ENCODE measurements at regions of chr19 and their contacts with region 1.

Region 1: DNA sequence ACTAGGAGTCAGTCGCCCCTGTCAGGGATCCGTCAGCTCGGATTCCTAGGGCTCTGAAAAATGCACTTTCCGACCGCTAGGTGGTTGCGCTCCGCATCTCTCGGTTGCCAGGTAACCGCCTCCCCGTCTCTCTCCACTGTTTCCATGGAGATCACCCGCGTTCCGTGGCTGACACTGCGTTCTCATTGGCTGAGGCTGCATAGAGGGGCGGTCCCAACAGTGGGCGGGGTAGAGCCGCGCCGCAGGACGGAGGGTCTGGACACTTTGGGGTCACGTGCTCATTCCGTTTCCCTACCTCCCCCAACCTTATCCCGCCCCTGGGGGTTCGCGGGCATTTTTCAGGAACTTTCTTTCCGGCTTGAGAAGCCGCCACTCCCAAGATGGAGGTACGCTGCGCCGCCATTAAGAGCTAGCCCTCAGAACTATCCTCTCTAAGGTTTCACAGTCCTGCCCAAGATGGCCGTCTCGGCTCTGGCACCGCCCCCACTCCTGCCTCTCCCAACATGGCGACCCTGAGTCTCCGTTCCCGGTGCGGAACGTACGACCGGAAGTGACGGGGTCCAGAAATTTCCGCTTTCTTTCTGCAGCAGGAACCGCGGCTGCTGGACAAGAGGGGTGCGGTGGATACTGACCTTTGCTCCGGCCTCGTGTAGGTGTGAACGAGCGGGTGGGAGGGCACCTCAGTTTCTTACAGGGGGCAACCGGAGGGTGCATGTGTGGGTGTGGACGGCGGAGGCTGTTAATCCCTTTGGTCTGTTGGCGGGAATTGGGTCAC is at the starts of genes ODAD3 and PRKCSH:
- DNase-seq: peak; percentile 99
- ATAC-seq: peak; percentile 96
- H3K4me3 Mint-ChIP-seq: peak within 1 kb of the TSS; percentile 98
- H3K27ac Mint-ChIP-seq: peak within 1 kb of the TSS; percentile 99
- H3K4me1 Mint-ChIP-seq: peaks cover 14% of the 10 kb centered on the region
- H3K27me3 Mint-ChIP-seq: no peaks in the 10 kb centered on the region
- total RNA-seq, gene ODAD3: 0.16 to 0.25 TPM
- total RNA-seq, gene PRKCSH: 225 to 269 TPM

Region 2: GRCh38 chr19:10928525-10929401 is 506.5 kb before region 1 on chr19 and contains the starts of genes TIMM29 and YIPF2:
- CTCF ChIA-PET with region 1: no interaction called
- POLR2A ChIA-PET with region 1: no interaction called
- intact Hi-C with region 1: loop called in 1 of 2 experiments (anchors 1 kb)
- DNase-seq: peak; percentile 97
- ATAC-seq: peak; percentile 96
- H3K4me3 Mint-ChIP-seq: peak within 1 kb of the TSS; percentile 90
- H3K27ac Mint-ChIP-seq: peak within 1 kb of the TSS; percentile 79
- H3K4me1 Mint-ChIP-seq: peaks cover 21% of the 10 kb centered on the region
- H3K27me3 Mint-ChIP-seq: no peaks in the 10 kb centered on the region
- total RNA-seq, gene TIMM29: 8.6 to 15.5 TPM
- total RNA-seq, gene YIPF2: 15.8 to 21.3 TPM

Region 3: GRCh38 chr19:11339254-11340098 is 95.8 kb before region 1 on chr19 and contains the start of gene RAB3D:
- CTCF ChIA-PET with region 1: interaction called, 3 read pairs
- POLR2A ChIA-PET with region 1: no interaction called
- intact Hi-C with region 1: loop called in 1 of 2 experiments (anchors 2 kb)
- DNase-seq: peak; percentile 93
- ATAC-seq: peak; percentile 99
- H3K4me3 Mint-ChIP-seq: peak within 1 kb of the TSS; percentile 72
- H3K27ac Mint-ChIP-seq: no peak within 1 kb of the TSS
- H3K4me1 Mint-ChIP-seq: peaks cover 23% of the 10 kb centered on the region
- H3K27me3 Mint-ChIP-seq: no peaks in the 10 kb centered on the region
- total RNA-seq, gene RAB3D: 7.5 to 8.9 TPM

Region 4: GRCh38 chr19:11380653-11381534 is 54.4 kb before region 1 on chr19:
- CTCF ChIA-PET with region 1: interaction called, 16 read pairs
- POLR2A ChIA-PET with region 1: interaction called, 4 read pairs
- intact Hi-C with region 1: loop called (anchors 1 kb)
- DNase-seq: peak; percentile 97
- ATAC-seq: peak; percentile 86
- H3K4me3 Mint-ChIP-seq: peak overlapping the region; percentile 75
- H3K27ac Mint-ChIP-seq: peak overlapping the region; percentile 93
- H3K4me1 Mint-ChIP-seq: peaks cover 46% of the 10 kb centered on the region
- H3K27me3 Mint-ChIP-seq: peaks cover 14% of the 10 kb centered on the region

Region 5: GRCh38 chr19:11399667-11400066 is 35.6 kb before region 1 on chr19:
- CTCF ChIA-PET with region 1: no interaction called
- POLR2A ChIA-PET with region 1: no interaction called
- intact Hi-C with region 1: no loop called
- DNase-seq: no peak
- ATAC-seq: no peak
- H3K4me3 Mint-ChIP-seq: no peak overlapping the region
- H3K27ac Mint-ChIP-seq: no peak overlapping the region
- H3K4me1 Mint-ChIP-seq: no peaks in the 10 kb centered on the region
- H3K27me3 Mint-ChIP-seq: peaks cover 7% of the 10 kb centered on the region

Region 6: DNA sequence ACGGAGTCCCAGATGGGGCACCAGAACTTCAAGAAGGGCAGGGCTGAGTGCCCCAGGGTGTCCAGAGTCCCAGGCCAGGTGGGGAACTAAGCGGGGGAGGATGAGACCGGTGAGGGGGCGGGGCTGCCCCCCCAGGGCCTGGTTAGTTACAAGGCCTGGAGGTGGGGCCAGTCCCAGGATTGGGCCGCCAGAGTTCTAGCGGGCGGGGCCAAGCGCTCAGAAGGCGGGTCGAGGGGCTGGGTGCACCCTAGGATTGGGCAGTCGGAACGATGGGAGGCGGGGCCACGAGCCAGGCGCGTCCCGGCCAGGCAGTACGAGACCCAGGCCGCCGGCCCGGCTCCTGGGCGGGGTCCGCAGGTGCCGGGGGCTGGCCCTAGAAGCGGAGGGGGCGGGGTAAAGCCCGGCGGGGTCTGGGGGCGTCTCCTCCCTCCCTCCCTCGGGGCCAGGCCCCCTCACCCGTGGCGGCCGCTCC is 69.8 kb after region 1 on chr19:
- CTCF ChIA-PET with region 1: no interaction called
- POLR2A ChIA-PET with region 1: no interaction called
- intact Hi-C with region 1: loop called in 1 of 2 experiments (anchors 1 kb)
- DNase-seq: peak; percentile 98
- ATAC-seq: peak; percentile 95
- H3K4me3 Mint-ChIP-seq: peak overlapping the region; percentile 83
- H3K27ac Mint-ChIP-seq: peak overlapping the region; percentile 87
- H3K4me1 Mint-ChIP-seq: peaks cover 12% of the 10 kb centered on the region
- H3K27me3 Mint-ChIP-seq: no peaks in the 10 kb centered on the region

Region 7: GRCh38 chr19:11597202-11598102 is 162.2 kb after region 1 on chr19 and contains the start of gene ZNF627:
- CTCF ChIA-PET with region 1: no interaction called
- POLR2A ChIA-PET with region 1: no interaction called
- intact Hi-C with region 1: loop called in 1 of 2 experiments (anchors 1 kb)
- DNase-seq: peak; percentile 99
- ATAC-seq: peak; percentile 100
- H3K4me3 Mint-ChIP-seq: peak within 1 kb of the TSS; percentile 97
- H3K27ac Mint-ChIP-seq: peak within 1 kb of the TSS; percentile 91
- H3K4me1 Mint-ChIP-seq: peaks cover 34% of the 10 kb centered on the region
- H3K27me3 Mint-ChIP-seq: no peaks in the 10 kb centered on the region
- total RNA-seq, gene ZNF627: 6.4 to 6.7 TPM

Region 8: DNA sequence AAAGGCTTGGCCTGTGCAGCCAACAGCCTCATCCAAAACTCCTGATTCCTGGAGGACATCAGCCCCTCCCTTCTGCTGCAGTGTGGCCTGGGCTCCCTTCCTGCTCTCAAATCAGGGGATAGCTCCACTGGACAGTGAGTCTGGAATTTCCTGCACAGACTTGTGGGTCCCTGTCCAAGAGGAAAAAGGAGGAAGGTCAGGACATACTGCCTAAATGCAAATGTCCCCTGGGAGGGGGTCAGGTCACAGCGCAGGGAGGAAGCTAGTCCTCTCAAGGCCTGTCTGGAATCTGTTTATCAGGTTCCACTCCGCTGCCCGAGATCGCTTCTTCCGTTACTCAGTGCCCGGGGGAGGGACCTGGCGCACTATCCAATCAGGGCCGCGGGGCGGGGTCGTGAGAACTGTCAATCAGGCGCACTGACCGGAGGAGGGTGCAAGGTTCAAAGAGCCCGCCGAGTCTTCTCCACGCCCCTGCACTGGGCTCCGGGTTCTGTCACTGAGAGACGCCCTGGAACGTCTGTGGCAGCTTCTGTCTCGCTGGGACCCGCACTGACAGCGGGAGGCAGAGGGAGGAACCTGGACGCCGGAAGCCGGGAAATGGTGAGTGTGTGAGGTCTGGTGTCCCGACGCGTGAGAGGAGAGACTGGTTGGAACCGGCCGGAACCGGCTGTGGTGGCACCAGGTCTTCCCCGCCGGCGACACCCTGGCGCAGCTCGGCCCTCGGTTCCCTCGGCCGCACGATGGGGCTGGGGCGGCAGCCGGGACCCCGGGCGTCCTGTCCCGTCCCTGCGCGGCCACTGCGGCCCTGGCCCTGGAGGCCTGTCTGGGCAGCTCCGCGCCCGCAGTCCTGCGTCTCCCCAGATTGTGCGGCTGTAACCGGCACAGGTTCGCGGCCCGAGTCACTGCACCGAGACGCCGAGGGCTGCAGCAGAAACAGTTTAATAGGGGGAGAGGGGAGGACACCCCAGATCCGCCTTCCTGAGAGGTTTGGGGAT is 331.6 kb after region 1 on chr19 and contains the start of gene ZNF441:
- CTCF ChIA-PET with region 1: no interaction called
- POLR2A ChIA-PET with region 1: no interaction called
- intact Hi-C with region 1: no loop called
- DNase-seq: peak; percentile 98
- ATAC-seq: peak; percentile 99
- H3K4me3 Mint-ChIP-seq: peak within 1 kb of the TSS; percentile 88
- H3K27ac Mint-ChIP-seq: peak within 1 kb of the TSS; percentile 95
- H3K4me1 Mint-ChIP-seq: peaks cover 13% of the 10 kb centered on the region
- H3K27me3 Mint-ChIP-seq: peaks cover 12% of the 10 kb centered on the region
- total RNA-seq, gene ZNF441: 4.3 to 5.0 TPM